ENCODE measurements at regions of chr6 and their contacts with region 1.

Region 1: DNA sequence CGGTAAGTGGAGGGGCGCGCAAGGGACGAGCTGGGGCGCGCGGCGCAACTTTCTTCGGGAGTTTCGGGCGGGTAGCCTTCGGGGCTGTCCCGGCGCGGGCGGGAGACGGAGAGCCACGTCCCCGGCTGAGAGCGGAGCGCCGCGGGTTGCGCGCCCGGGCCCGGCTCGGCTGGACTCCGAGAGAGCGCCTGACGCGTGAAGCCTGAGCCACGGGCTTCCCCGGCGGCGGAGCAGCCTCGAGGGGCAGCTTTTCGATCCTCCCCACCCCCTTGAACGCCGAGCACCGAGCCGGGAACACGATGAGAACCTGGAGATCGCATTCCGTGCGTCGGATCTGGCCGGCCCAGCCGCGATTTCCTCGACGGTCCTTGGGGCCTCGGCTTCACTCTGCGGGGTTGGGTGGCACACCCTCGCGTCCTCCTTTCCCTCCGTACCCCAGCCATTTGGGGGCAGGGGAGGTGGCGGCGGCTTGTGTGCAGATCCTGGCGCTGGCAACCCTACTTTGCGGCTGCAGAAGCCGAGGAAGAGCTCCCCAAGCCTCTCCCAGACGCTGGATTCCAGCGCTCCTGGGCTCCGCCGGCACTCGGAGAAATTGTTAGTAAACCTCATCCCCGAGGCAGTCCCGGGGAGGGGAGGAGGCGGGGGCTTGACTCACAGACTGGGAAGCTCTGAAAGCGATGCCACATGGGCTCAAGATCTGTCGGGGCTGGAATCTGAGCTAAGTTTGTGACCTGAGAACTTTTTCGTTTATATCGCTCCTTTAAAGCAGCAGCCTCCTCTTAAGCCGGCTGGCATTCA is 572 bp downstream of the DSE start:
- DNase-seq: peak; percentile 87
- ATAC-seq: peak; percentile 75

Region 2: GRCh38 chr6:116047173-116047933 is 324.0 kb before region 1 on chr6:
- intact Hi-C with region 1: no loop called
- DNase-seq: no peak
- ATAC-seq: no peak

Region 3: DNA sequence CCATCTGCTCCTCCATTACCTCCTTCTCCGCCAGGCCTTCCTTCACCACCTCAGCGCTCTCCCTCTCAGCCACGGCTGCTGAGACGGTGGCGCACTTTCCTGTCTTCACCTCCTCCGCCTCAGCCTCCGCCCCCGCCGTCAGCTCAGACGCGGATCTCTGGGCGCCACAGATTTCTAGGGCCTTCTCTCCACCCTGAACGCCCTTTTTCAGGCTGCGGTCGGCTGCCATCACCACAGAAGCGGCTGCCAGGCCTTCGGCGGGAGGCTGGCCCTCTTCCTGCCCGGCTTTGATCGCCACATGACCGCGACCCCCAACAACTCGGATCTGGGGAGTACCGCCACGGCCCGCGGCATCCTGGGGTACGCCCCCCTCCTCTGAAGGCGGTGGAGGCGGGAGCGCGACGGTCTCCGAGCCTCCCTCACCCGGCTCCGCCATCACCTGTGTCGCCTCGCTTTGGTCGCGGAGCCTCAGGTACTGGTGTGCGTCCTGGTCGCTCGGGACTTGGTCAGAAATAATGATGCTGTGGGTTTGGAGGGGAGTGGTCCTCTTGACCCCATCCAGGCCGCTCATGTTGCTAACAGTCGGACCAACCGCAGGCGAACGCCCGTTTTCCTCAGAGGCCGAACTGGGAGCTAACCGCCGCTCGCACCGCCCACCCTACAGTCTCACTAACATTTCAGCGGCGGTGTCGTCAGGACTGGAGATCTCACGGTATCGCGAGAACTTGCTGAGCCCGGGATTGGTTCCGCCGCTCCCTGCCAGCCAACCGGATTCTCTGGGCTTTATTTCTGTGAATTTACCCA is 91.9 kb before region 1 on chr6 and contains the start of gene TSPYL1:
- intact Hi-C with region 1: loop called (anchors 5 kb)
- DNase-seq: peak; percentile 96
- ATAC-seq: peak; percentile 98
- total RNA-seq, gene TSPYL1: 80.6 TPM

Region 4: DNA sequence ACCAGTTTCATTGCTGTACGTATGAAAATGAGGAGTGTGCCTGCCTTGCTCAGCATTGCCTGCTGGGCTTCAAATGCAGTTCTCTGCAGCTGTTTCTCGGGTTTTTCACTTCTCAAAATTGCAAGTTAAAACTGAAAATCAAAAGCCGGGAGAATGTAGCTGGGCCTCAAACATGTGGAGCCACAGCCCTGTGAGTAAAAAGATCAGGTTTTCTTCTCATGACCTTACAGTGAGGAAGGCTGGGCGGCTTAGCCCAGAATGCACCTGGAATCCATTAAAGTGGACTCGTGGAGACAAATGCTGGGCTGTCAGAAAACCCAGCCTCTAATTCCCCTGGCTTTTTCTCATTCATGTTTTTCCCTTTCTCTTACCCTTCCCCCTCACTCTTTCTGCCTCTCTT is 33.8 kb after region 1 on chr6:
- intact Hi-C with region 1: loop called (anchors 5 kb)
- DNase-seq: no peak
- ATAC-seq: peak; percentile 20

Measured in Right ventricle myocardium inferior (tissue), 1 donor.